HepG2 (cell line): ENCODE measurements at regions of chr16 and their contacts with region 1.

Region 1: GRCh38 chr16:74309789-74310781 is 13.5 kb downstream of the PSMD7 start:
- DNase-seq: peak; percentile 62
- ATAC-seq: peak; percentile 65
- H3K4me3 ChIP-seq: no peak overlapping the region
- H3K27ac ChIP-seq: no peak overlapping the region
- H3K4me1 ChIP-seq: no peaks in the 10 kb centered on the region
- H3K27me3 ChIP-seq: no peaks in the 10 kb centered on the region
- CTCF ChIP-seq: peak; percentile 83
- EP300 ChIP-seq: no peak
- POLR2A ChIP-seq: no peak
- RAD21 ChIP-seq: peak; percentile 68

Region 2: GRCh38 chr16:74325641-74326040 is 15.6 kb after region 1 on chr16:
- CTCF ChIA-PET with region 1: no interaction called
- POLR2A ChIA-PET with region 1: no interaction called
- in situ Hi-C with region 1: no loop called
- intact Hi-C with region 1: no loop called
- DNase-seq: no peak
- ATAC-seq: no peak
- H3K4me3 ChIP-seq: no peak overlapping the region
- H3K27ac ChIP-seq: no peak overlapping the region
- H3K4me1 ChIP-seq: no peaks in the 10 kb centered on the region
- H3K27me3 ChIP-seq: no peaks in the 10 kb centered on the region
- CTCF ChIP-seq: no peak
- EP300 ChIP-seq: no peak
- POLR2A ChIP-seq: no peak
- RAD21 ChIP-seq: no peak

Region 3: DNA sequence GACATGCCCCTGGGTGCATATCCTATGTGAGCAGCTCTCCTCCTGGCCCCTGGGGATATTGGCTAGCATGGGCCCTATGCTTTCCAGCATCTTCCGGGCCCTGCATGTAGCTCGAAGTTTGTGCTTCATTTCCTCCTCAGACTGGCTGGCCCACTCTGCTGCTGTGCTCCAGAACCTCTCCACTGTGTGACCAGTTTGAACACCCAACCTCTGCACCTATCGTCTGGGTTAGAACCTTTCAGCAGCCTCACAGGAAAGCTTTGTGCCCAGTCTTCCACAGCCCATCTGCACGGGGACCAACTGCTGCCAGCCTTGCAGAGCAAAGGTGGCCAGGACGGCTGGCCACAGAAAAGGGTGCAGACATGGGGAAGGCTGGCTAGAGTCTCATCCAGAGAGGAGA is 121.4 kb after region 1 on chr16:
- CTCF ChIA-PET with region 1: interaction called, 10 read pairs
- POLR2A ChIA-PET with region 1: no interaction called
- in situ Hi-C with region 1: loop called (anchors 5 kb)
- intact Hi-C with region 1: loop called (anchors 1 kb)
- DNase-seq: no peak
- ATAC-seq: peak; percentile 13; the same call in 1 of the 3 replicates
- H3K4me3 ChIP-seq: no peak overlapping the region
- H3K27ac ChIP-seq: no peak overlapping the region
- H3K4me1 ChIP-seq: peaks cover 9% of the 10 kb centered on the region; the same call in 1 of the 2 replicates
- H3K27me3 ChIP-seq: no peaks in the 10 kb centered on the region
- CTCF ChIP-seq: no peak
- EP300 ChIP-seq: no peak
- POLR2A ChIP-seq: no peak
- RAD21 ChIP-seq: no peak

Region 4: DNA sequence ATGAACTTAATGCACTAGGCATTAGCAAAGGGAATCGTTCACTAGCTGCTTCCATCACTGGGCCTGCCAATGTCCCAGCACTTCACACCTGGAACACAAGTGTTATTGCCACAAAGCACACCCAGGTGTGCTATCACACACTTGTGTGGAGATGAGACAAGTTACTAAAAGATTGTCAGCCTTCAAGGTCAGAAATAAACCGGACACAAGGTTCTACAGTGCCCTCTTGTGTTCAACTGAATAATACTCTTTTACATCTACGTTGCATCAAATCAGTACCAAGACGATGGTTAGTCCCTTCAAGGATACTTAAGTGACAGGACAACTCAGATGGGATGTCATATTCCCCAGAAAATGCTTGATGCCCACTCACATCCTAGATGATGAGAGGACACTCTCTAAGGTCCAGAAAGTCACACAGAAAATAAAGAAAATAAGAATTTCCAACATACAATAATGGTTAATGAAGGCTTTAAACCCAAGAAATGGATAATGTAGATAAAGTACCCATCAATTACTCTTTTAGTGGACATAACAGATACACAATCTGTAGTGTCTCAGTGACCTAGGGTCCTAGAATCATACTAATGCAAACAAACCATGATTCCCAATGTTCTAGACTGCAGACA is 313.2 kb after region 1 on chr16:
- CTCF ChIA-PET with region 1: interaction called, 7 read pairs
- POLR2A ChIA-PET with region 1: no interaction called
- in situ Hi-C with region 1: loop called (anchors 10 kb)
- intact Hi-C with region 1: no loop called
- DNase-seq: peak; percentile 55
- ATAC-seq: peak; percentile 61
- H3K4me3 ChIP-seq: no peak overlapping the region
- H3K27ac ChIP-seq: no peak overlapping the region
- H3K4me1 ChIP-seq: no peaks in the 10 kb centered on the region
- H3K27me3 ChIP-seq: no peaks in the 10 kb centered on the region
- CTCF ChIP-seq: peak; percentile 86
- EP300 ChIP-seq: no peak
- POLR2A ChIP-seq: no peak
- RAD21 ChIP-seq: peak; percentile 73